ENCODE measurements at regions of chr1 and their contacts with region 1.

Region 1: DNA sequence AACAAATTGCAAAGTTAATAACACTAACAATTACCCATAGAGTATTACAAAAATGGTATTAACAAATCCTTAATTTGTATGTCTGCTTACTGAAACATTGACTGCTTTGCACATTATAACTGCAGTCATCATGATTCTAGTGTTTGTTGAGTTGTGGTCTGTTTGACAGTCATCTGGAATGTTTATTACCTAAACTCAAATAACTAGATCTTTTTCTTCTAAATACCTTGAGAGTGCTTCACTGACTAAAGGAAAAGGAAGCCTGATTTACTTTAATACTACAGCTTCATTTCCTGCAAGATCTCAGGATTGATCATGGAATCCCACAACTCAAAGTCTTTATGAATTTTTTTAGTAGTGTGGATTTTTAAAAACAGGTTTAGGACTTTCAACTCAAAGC is 70.0 kb downstream of the HMCN1 start:
- DNase-seq: no peak
- ATAC-seq: no peak

Region 2: DNA sequence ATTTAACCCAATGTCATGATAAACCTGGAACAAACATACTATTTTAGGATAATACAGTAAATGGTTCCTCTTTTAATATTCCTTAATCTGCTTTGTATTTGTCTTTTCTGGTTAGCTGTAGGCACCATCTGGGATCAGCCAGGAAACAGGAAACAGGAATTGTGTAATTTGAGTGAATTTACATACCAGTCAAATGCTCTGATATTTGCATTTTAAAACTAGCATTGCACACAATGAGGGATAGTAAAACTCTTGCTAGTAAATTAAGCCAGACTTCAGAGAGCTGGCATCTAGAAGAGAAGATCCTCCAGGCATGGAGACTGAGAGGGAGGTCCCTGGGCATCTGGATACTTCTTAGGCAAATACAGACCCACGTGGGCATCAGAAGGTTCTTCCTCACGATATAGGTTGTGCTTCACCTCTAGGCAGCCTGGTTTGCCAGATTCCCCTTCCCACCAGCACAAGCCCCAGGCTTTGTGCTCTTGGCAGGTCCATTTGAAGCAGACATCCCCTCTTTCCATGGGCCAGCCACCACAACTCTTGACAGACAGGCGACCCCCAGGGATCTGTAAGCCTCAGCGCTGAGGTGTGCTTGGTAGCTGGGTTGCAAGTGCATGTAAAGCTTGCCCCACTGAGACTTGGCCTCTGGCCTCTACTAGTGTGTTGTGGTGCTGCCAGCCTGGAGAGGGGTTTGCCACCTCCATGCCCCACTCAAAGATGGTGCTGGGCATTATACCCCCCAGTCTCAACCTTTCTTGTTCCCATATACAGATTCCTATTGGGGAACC is 33.7 kb after region 1 on chr1:
- intact Hi-C with region 1: no loop called
- DNase-seq: no peak
- ATAC-seq: no peak

Region 3: DNA sequence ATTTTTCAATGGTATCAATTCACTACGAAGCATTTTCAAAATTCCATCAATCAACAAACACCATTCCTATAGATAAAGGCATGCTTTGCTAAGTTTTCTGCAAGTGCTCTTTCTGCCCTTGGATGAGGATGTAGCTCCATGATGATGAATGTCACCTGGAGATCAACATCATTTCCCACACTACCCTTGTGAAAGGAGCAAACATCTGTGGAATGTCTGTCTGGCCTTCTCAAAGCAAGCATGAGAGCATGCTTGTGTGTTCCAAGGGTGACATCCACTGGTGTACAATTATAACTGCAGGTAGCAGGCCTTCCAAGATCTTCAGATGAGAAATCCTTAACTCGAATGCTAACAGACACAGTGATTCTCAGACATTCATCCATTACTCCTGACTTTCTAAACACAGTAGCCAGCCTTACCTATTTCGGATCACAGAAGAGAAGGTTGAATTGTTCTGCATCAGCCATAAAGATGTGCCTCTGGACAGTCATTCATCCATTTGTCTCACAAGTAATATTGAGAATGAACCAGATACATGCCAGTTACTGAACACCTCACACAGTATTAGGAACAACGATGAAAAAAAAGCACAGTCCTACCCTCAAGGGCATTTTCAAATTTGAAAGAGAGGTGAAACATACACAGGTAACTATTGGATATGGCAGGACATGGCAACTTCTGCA is 408.5 kb after region 1 on chr1:
- intact Hi-C with region 1: loop called (anchors 10 kb)
- DNase-seq: no peak
- ATAC-seq: peak; percentile 94